Dendritic cell treated with granulocyte-macrophage colony-stimulating factor and Interleukin-4, amounts not matched to agents 40 ng/mL and 50 ng/mL, for 4 days (primary cell): ENCODE measurements at regions of chr15 and their contacts with region 1.

Region 1: DNA sequence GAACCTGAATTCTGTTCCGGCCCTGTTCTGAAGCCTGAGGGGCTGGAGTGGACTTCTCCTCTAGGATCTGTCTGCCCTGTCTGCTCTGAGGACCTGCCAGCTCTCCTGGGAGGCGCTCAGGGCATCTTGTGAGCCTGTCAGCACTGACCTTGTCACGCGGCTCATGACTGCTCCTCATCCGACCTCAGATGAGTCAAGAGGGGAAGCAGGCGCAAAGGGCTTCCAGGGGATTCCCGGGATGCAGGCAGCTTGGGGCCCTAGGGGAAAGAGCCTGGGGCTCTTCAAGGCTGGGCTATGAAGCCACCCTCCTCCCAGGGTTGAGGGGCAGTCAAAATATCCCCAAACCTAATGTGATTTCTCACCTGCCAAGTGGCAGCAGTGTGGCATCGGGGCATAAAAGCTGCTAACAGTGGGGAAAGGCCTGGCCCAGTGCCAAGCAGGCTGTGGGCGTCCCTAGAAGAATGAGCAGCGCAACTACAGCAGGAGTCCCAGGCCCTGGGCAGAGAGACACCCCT is 27.6 kb upstream of the ANKDD1A start:
- H3K4me3 Mint-ChIP-seq: peak overlapping the region; percentile 65
- H3K27ac Mint-ChIP-seq: peak overlapping the region; percentile 98
- H3K4me1 Mint-ChIP-seq: peaks cover 56% of the 10 kb centered on the region
- H3K27me3 Mint-ChIP-seq: no peaks in the 10 kb centered on the region

Region 2: DNA sequence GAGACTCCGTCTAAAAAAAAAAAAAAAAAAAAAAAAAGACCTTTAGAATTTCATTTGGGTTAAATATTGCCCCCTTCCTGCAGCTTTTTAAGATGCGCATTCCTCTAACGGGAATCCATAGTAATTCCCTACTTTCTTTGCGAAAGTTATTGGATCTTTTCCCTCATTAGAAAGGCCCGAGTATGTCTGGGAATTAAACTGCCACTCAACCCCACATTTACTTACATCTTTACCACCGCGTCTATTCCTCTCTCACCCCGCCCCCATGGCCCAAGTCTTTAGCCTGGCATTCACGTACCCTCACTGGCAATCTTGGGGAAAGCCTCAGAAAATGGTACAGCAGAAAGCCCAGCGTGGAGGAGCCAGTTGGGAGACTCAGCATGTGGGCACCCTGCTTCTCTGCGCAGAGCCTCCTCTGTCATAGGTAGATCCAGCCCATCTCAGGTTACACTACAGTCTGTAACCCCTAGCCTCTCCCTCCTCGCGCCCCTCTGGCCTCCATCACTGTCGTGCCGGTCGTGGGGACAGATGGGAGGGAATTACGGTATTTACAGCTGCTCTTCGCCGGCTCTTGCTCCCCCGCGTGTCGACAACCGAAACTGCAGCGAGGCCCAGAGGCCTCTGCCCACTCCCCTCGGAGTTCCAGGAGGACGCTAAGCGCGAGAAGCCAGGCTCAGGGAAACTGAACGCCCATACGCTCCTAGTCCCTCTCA is 21.2 kb after region 1 on chr15:
- intact Hi-C with region 1: loop called (anchors 2 kb)
- H3K4me3 Mint-ChIP-seq: peak overlapping the region; percentile 61
- H3K27ac Mint-ChIP-seq: peak overlapping the region; percentile 73
- H3K4me1 Mint-ChIP-seq: peaks cover 34% of the 10 kb centered on the region
- H3K27me3 Mint-ChIP-seq: peaks cover 12% of the 10 kb centered on the region